ENCODE measurements at regions of chr2 and their contacts with region 1.

Region 1: GRCh38 chr2:219509780-219510511 is 4.3 kb upstream of the ASIC4 start:
- DNase-seq: peak; percentile 61
- ATAC-seq: peak; percentile 81
- H3K4me3 ChIP-seq: peak overlapping the region; percentile 44
- H3K27ac ChIP-seq: no peak overlapping the region
- H3K4me1 ChIP-seq: no peaks in the 10 kb centered on the region; the same call in 1 of the 2 replicates
- H3K27me3 ChIP-seq: peaks cover 47% of the 10 kb centered on the region
- CTCF ChIP-seq: peak; percentile 66

Region 2: DNA sequence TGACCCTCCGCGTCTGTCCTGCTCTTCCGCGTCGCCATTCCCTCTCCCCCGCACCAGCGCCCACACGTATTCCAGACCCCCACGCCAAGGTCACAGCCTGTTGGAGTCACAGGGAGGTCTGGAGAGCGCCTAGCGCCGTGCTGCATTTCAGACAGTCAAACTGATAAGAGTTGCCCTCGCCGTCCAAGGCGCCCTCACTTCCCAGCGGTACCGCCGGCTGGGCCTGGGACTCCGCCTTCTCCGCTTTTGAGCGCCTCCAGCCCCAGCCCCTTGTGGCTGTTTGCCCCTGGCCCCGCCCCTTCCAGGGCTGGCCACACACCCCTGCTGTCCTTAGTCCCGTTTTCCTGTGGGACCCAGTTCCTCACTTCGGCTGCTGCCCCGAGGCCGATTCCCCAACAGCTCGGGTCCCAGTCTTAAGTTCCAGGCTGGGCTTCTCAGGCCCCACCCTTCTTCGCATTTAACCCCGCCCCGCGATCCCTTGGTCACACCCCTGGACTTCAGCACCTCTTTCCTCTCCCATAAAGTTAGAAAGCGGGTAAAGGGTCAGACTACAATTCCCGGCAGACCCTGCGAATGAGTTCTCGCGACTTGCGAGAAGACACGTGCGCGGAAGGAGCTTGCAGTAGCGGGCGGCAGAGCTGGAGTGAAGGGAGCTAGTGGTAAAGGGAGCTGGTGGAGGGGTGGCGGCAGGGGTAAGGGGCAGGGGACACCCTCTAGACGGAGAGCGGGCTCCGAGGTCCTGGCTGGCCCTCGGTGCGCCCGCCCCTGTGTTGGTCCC is 11.5 kb before region 1 on chr2 and contains the start of gene GMPPA:
- CTCF ChIA-PET with region 1: interaction called, 14 read pairs
- POLR2A ChIA-PET with region 1: interaction called, 9 read pairs
- intact Hi-C with region 1: no loop called
- DNase-seq: peak; percentile 99
- ATAC-seq: peak; percentile 83
- H3K4me3 ChIP-seq: peak within 1 kb of the TSS; percentile 85
- H3K27ac ChIP-seq: peak within 1 kb of the TSS; percentile 68
- H3K4me1 ChIP-seq: peaks cover 21% of the 10 kb centered on the region
- H3K27me3 ChIP-seq: no peaks in the 10 kb centered on the region
- CTCF ChIP-seq: no peak
- total RNA-seq, gene GMPPA: 78.1 and 85.7 TPM in 2 replicates

Region 3: GRCh38 chr2:219521066-219521880 is 11.3 kb after region 1 on chr2:
- CTCF ChIA-PET with region 1: interaction called, 22 read pairs
- POLR2A ChIA-PET with region 1: interaction called, 41 read pairs
- intact Hi-C with region 1: no loop called
- DNase-seq: peak; percentile 61
- ATAC-seq: peak; percentile 79
- H3K4me3 ChIP-seq: peak overlapping the region; percentile 44; the same call in 1 of the 2 replicates
- H3K27ac ChIP-seq: no peak overlapping the region
- H3K4me1 ChIP-seq: peaks cover 14% of the 10 kb centered on the region
- H3K27me3 ChIP-seq: no peaks in the 10 kb centered on the region
- CTCF ChIP-seq: peak; percentile 91